Posterior vena cava (tissue), 2 donors: ENCODE measurements at regions of chr9 and their contacts with region 1.

Region 1: DNA sequence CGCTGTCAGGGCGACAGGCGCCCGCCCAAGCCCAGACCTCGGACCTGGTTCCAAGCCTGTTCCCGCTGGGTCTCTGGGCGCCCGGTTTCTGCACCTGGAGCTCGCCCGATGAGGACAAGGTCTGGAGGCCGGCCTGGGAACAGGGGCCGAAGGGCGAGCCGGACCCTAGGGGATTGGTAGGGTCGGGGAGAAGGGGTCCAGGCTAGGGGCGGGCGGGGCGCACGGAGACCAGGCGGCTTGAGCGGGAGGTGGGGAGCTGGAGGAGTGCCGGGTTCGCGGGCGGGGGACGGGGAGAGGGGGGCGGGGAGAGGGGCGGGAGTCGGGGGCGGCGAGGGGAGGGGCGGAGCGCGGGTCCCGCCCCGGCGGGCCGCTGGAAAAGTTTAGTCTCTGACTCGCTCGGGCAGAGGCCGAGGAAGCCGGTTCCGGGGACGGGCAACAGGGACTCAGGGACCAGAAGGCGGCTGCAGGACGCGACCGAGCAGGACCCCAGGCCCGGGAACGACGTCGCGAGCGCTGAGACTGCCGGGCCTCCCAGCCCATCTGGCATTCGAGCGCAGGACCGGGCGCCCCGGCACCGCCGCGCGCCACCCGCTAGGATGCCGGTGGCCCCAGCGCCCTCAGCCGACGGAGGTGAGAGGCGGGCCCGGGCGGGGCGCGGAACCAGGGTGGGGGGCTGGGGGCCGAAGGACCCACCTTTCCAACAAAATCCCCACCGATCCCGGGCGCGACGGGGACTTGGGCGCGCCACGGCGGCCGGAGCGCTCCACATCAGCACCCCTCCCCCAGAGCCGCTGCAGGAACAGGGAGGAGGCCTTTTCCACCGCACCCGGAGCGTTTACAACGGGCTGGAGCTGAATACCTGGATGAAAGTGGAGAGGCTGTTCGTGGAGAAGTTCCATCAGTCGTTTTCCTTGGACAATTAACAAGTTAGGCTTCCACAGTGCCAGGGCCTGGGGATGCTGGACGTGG is at the start of gene S1PR3:
- DNase-seq: peak; percentile 89
- total RNA-seq, gene S1PR3: 90.5 to 208 TPM

Region 2: DNA sequence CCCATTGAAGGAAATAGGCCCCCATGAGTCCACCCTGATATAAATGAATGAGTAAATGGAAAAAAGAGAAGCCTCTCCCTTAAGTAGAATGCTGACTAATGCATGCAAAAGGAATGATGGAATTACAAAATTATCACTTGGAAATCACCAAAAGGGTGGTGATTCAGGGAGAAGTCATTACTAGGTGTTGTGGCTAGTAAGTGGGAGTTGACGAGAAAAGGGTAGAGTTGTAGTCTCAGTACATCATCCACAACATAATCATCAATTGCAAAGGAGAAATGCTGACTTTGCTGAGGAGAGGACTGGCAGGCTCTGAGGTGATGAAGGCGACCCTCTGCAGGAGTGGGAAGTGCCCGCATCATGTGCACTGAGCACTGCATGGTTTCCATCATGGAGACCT is 201.6 kb before region 1 on chr9:
- intact Hi-C with region 1: loop called in 1 of 2 experiments (anchors 5 kb)
- DNase-seq: no peak

Region 3: GRCh38 chr9:88799541-88800328 is 191.6 kb before region 1 on chr9:
- intact Hi-C with region 1: loop called in 1 of 2 experiments (anchors 5 kb)
- DNase-seq: no peak

Region 4: DNA sequence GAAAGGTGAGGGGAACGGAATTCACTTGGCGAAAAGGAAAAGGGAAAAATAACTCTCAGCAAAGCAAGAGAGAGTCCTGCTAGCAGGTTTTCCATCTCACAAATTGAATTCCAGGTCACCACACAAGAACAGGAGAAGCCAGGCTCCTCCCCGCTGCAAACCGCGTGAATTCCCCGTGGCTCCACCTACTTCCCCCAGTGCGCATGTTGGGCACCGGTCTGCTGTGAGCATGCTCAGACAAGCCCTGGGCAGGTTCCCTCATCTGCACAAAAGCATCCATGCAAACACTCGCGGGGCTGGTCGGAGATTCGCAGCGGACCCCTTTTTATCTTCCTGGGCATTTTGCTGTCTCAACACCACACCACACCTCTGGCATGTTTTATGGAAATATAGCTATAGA is 58.6 kb before region 1 on chr9:
- intact Hi-C with region 1: no loop called
- DNase-seq: no peak